Gastrocnemius medialis (tissue), 4 donors: ENCODE measurements at regions of chr9 and their contacts with region 1.

Region 1: GRCh38 chr9:19028835-19029451 is 4.1 kb downstream of the SAXO1 start:
- DNase-seq: no peak
- ATAC-seq: peak in 1 of 2 donors; percentile 46
- H3K4me3 ChIP-seq: no peak overlapping the region
- H3K27ac ChIP-seq: no peak overlapping the region
- H3K4me1 ChIP-seq: no peaks in the 10 kb centered on the region
- H3K27me3 ChIP-seq: peaks cover 0 to 8% (median 0%) of the 10 kb centered on the region in 3 donors
- CTCF ChIP-seq: peak; percentile 22 to 74 (median 63)
- POLR2A ChIP-seq: no peak

Region 2: DNA sequence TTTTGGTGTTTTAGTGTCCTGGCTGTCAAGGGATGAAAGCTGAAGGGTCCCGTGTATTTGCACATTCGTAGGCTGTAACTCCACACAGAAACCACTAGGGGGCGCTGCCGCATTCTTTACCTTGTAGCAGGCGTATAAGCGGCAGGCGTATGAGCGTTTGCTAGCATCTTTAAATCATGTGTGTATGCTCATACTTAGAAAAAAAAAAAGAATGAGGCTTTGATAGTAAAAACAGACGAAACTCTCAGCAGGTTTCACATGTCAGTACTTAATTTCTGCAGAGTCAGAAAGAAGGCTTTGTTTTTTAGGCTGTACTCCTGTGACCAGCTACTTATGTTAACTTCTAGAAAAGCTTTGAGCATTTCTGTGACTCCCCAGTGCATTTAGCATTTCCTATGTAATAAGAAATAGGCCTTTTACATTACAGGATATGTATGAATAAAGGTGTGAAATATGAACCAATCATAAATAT is 773.7 kb before region 1 on chr9:
- in situ Hi-C with region 1: loop called (anchors 5 to 10 kb)
- intact Hi-C with region 1: loop called (anchors 1 kb)
- DNase-seq: peak; percentile 28 to 32
- ATAC-seq: peak; percentile 56 to 58
- H3K4me3 ChIP-seq: no peak overlapping the region
- H3K27ac ChIP-seq: no peak overlapping the region
- H3K4me1 ChIP-seq: no peaks in the 10 kb centered on the region
- H3K27me3 ChIP-seq: no peaks in the 10 kb centered on the region
- CTCF ChIP-seq: peak; percentile 69 to 91 (median 81)
- POLR2A ChIP-seq: no peak

Region 3: GRCh38 chr9:18543406-18544192 is 485.3 kb before region 1 on chr9:
- in situ Hi-C with region 1: no loop called
- intact Hi-C with region 1: no loop called
- DNase-seq: no peak
- ATAC-seq: no peak
- H3K4me3 ChIP-seq: no peak overlapping the region
- H3K27ac ChIP-seq: no peak overlapping the region
- H3K4me1 ChIP-seq: no peaks in the 10 kb centered on the region
- H3K27me3 ChIP-seq: no peaks in the 10 kb centered on the region
- CTCF ChIP-seq: no peak
- POLR2A ChIP-seq: no peak